Gastrocnemius medialis (tissue), 4 donors: ENCODE measurements at regions of chr17 and their contacts with region 1.

Region 1: GRCh38 chr17:81558941-81559806 is 7.0 kb upstream of the FAAP100 start:
- DNase-seq: no peak
- ATAC-seq: no peak
- H3K4me3 ChIP-seq: no peak overlapping the region
- H3K27ac ChIP-seq: no peak overlapping the region
- H3K4me1 ChIP-seq: peaks cover 8 to 12% of the 10 kb centered on the region in 2 donors
- H3K27me3 ChIP-seq: no peaks in the 10 kb centered on the region
- CTCF ChIP-seq: no peak
- POLR2A ChIP-seq: no peak

Region 2: GRCh38 chr17:80656590-80656989 is 902.6 kb before region 1 on chr17:
- in situ Hi-C with region 1: no loop called
- intact Hi-C with region 1: no loop called
- DNase-seq: no peak
- ATAC-seq: no peak
- H3K4me3 ChIP-seq: no peak overlapping the region
- H3K27ac ChIP-seq: no peak overlapping the region
- H3K4me1 ChIP-seq: no peaks in the 10 kb centered on the region
- H3K27me3 ChIP-seq: no peaks in the 10 kb centered on the region
- CTCF ChIP-seq: no peak
- POLR2A ChIP-seq: no peak

Region 3: DNA sequence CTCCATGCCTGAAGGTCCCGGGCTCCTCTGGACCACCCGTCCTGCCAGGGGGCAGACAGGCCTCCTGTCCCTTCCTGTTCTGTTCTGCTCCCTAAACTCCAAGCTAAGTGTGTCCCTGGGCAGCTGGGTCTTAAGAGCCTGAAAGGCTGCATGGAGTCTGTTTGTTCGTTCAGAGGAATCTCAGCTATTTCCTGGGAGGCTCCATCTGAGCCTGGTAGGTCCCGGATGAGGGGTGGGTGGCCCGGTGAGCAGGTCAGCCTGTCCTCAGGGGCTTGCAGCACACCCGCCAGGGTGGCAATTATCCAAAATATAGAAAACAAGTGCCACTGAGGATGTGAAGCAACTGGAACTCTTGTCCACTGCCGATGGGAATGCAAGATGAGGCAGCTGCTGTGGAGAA is 59.1 kb before region 1 on chr17:
- in situ Hi-C with region 1: no loop called
- intact Hi-C with region 1: no loop called
- DNase-seq: no peak
- ATAC-seq: no peak
- H3K4me3 ChIP-seq: no peak overlapping the region
- H3K27ac ChIP-seq: no peak overlapping the region
- H3K4me1 ChIP-seq: no peaks in the 10 kb centered on the region
- H3K27me3 ChIP-seq: no peaks in the 10 kb centered on the region
- CTCF ChIP-seq: no peak
- POLR2A ChIP-seq: no peak

Region 4: GRCh38 chr17:81601525-81602120 is 42.4 kb after region 1 on chr17:
- in situ Hi-C with region 1: no loop called
- intact Hi-C with region 1: loop called (anchors 5 kb)
- DNase-seq: no peak
- ATAC-seq: peak; percentile 61 to 85
- H3K4me3 ChIP-seq: no peak overlapping the region
- H3K27ac ChIP-seq: no peak overlapping the region
- H3K4me1 ChIP-seq: no peaks in the 10 kb centered on the region
- H3K27me3 ChIP-seq: no peaks in the 10 kb centered on the region
- CTCF ChIP-seq: peak; percentile 34 to 81 (median 66)
- POLR2A ChIP-seq: no peak